Esophagus muscularis mucosa (tissue), 4 donors: ENCODE measurements at regions of chr13 and their contacts with region 1.

Region 1: GRCh38 chr13:45310341-45311125 is 30.4 kb downstream of the TPT1 start:
- DNase-seq: no peak
- H3K4me3 ChIP-seq: peak overlapping the region; percentile 46 to 59 (median 54)
- H3K27ac ChIP-seq: no peak overlapping the region
- H3K4me1 ChIP-seq: peaks cover 5 to 24% (median 23%) of the 10 kb centered on the region in 4 donors
- H3K27me3 ChIP-seq: peaks cover 0 to 8% (median 0%) of the 10 kb centered on the region in 4 donors
- CTCF ChIP-seq: no peak
- EP300 ChIP-seq: no peak
- POLR2A ChIP-seq: no peak

Region 2: DNA sequence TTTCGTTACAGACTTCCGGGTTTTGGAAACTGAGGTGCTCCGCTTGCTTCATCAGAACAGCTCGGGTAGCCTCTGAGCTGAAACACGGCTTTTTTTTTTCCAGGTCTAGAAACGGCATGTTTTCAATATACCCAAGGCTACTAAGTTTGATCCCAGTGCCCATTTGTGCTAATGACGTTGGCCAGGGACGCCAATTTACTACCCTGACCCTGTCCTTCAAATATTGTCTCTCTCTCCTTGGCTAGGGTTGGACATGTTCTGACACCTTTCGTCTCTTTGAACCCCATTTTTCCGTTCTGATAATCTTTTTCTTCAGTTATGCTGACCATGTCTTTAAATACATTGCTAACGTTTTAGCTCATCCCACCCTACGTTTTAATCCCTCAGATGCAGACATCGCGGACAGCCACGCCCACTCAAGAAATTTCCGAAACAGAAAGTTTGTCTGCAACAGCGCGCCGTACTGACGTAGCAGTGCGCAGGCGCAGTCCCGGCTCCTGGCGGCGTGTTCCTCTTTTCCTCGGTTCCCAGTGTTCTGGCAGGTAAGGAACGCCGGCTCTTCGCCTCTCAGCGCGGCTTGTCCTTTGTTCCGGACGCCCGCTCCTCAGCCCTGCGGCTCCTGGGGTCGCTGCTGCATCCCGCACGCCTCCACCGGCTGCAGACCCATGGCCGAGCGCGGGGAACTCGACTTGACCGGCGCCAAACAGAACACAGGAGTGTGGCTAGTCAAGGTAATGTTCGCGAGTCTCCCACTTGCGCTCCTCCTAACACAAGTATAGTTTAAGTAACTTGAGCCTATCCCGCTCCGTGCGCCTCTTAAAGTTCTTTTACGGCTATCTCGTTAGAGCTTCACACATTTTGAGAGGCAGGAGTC is 190.3 kb before region 1 on chr13 and contains the start of gene GTF2F2:
- intact Hi-C with region 1: loop called (anchors 5 kb)
- DNase-seq: peak; percentile 96
- H3K4me3 ChIP-seq: peak within 1 kb of the TSS; percentile 76 to 95 (median 87)
- H3K27ac ChIP-seq: peak within 1 kb of the TSS; percentile 80 to 89 (median 84)
- H3K4me1 ChIP-seq: peaks cover 16 to 34% (median 26%) of the 10 kb centered on the region in 4 donors
- H3K27me3 ChIP-seq: no peaks in the 10 kb centered on the region
- CTCF ChIP-seq: peak in 1 of 3 experiments; percentile 18
- EP300 ChIP-seq: no peak
- POLR2A ChIP-seq: no peak
- total RNA-seq, gene GTF2F2: 12.9 to 15.1 (median 14.6) TPM